Activated CD4-positive, alpha-beta T cell treated with anti-CD3 and anti-CD28 coated beads for 36 hours (primary cell): ENCODE measurements at regions of chr19 and their contacts with region 1.

Region 1: DNA sequence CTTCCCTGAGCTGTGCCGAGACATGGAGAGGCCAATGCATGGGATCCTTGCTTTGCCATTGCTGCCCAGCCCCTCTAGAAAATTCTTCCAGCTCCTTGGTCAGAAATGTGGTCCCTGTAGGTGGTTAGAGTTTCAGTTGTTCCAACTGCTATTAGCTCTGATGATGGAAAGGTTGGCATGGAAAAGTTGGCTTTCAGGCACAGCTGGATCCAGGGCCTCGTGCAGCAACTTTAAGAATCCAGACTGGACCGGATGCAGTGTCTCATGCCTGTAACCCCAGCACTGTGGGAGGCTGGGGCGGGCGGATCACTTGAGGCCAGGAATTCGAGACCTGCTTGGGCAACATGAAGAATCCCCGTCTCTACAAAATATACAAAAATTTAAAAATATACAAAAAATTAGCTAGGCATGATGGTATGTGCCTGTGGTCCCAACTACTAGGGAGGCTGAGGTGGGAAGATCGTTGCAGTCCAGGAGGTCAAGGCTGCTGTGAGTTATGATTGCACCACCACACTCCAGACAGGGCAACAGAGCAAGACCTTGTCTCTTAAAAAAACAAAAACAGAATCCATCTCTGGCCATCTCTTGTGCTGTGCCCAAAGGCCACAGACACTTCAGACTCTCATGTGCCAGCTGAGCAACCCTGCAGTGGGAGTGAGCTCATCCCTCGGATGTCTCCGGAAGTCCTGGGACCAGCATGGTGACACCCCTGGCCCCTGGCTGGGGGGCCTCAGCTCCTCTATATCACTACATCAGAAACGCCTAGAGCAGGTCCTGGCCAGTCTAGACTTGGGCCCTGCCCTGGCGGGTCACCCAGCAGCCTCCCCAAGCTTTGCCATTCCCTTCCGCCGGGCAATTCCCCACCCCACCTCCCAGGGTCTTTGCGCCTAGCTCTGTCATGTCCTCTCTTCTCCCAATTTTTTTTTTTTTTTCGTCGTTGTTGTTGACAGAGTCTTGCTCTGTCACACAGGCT is 16.8 kb downstream of the MEX3D start:
- DNase-seq: no peak
- ATAC-seq: no peak
- H3K4me3 Mint-ChIP-seq: no peak overlapping the region
- H3K27ac Mint-ChIP-seq: no peak overlapping the region
- H3K4me1 Mint-ChIP-seq: peaks cover under 1% of the 10 kb centered on the region
- H3K27me3 Mint-ChIP-seq: peaks cover 2% of the 10 kb centered on the region

Region 2: GRCh38 chr19:1632462-1633268 is 81.3 kb after region 1 on chr19:
- CTCF ChIA-PET with region 1: no interaction called
- POLR2A ChIA-PET with region 1: no interaction called
- intact Hi-C with region 1: no loop called
- DNase-seq: no peak
- ATAC-seq: no peak
- H3K4me3 Mint-ChIP-seq: no peak overlapping the region
- H3K27ac Mint-ChIP-seq: no peak overlapping the region
- H3K4me1 Mint-ChIP-seq: no peaks in the 10 kb centered on the region
- H3K27me3 Mint-ChIP-seq: no peaks in the 10 kb centered on the region

Region 3: DNA sequence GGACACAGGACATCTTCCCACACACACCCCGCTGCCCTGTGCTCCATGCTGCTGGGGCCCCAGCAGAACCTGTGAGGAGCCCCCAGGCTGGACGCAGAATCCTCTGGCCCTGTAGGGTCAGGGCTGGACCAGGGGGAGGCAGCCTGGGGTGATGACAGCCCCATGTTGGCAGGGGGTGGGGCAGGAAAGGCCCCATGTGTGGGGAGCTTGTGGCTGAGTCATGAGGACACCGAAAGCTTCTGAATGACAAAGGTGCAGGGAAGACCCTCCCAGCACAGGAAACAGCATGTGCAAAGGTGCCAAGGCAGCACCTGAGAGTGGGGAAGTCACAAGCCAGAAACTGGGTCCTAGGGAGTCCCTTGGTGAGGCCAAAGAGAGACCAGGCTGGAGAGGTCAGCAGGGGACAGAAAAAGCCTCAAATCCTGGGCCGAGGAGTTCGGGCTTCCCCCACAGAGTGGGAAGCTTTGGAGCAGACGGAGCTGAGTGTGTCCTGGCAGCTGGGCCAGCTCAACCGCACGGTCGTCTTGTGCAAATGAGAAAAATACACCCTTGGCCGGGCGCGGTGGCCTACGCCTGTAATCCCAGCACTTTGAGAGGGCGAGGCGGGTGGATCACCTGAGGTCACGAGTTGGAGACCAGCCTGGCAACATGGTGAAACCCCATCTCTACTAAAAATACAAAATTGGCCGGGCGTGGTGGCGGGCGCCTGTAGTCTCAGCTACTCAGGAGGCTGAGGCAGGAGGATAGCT is 243.2 kb after region 1 on chr19:
- CTCF ChIA-PET with region 1: interaction called, 4 read pairs
- POLR2A ChIA-PET with region 1: no interaction called
- intact Hi-C with region 1: loop called in 1 of 2 experiments (anchors 5 kb)
- DNase-seq: peak; percentile 39
- ATAC-seq: no peak
- H3K4me3 Mint-ChIP-seq: no peak overlapping the region
- H3K27ac Mint-ChIP-seq: no peak overlapping the region
- H3K4me1 Mint-ChIP-seq: peaks cover 6% of the 10 kb centered on the region
- H3K27me3 Mint-ChIP-seq: peaks cover 14% of the 10 kb centered on the region